Thyroid gland (tissue), 4 donors: ENCODE measurements at regions of chr3 and their contacts with region 1.

Region 1: GRCh38 chr3:160003520-160004128 is 15.0 kb downstream of the IL12A start:
- DNase-seq: peak; percentile 60 to 64
- H3K4me3 ChIP-seq: no peak overlapping the region
- H3K27ac ChIP-seq: no peak overlapping the region
- H3K4me1 ChIP-seq: no peaks in the 10 kb centered on the region
- H3K27me3 ChIP-seq: no peaks in the 10 kb centered on the region
- CTCF ChIP-seq: peak in 3 of 6 experiments; percentile 45 to 54 (median 51)
- POLR2A ChIP-seq: no peak

Region 2: GRCh38 chr3:159828542-159828943 is 175.1 kb before region 1 on chr3:
- intact Hi-C with region 1: loop called (anchors 5 kb)
- DNase-seq: no peak
- H3K4me3 ChIP-seq: no peak overlapping the region
- H3K27ac ChIP-seq: no peak overlapping the region
- H3K4me1 ChIP-seq: no peaks in the 10 kb centered on the region
- H3K27me3 ChIP-seq: no peaks in the 10 kb centered on the region
- CTCF ChIP-seq: peak in 5 of 6 experiments; percentile 23 to 65 (median 51)
- POLR2A ChIP-seq: no peak

Region 3: GRCh38 chr3:159884661-159885402 is 118.8 kb before region 1 on chr3:
- intact Hi-C with region 1: loop called (anchors 5 kb)
- DNase-seq: no peak
- H3K4me3 ChIP-seq: no peak overlapping the region
- H3K27ac ChIP-seq: no peak overlapping the region
- H3K4me1 ChIP-seq: peaks cover 0 to 11% of the 10 kb centered on the region in 2 donors
- H3K27me3 ChIP-seq: no peaks in the 10 kb centered on the region
- CTCF ChIP-seq: peak; percentile 14 to 73 (median 48)
- POLR2A ChIP-seq: no peak